HepG2 (cell line): ENCODE measurements at regions of chr2 and their contacts with region 1.

Region 1: DNA sequence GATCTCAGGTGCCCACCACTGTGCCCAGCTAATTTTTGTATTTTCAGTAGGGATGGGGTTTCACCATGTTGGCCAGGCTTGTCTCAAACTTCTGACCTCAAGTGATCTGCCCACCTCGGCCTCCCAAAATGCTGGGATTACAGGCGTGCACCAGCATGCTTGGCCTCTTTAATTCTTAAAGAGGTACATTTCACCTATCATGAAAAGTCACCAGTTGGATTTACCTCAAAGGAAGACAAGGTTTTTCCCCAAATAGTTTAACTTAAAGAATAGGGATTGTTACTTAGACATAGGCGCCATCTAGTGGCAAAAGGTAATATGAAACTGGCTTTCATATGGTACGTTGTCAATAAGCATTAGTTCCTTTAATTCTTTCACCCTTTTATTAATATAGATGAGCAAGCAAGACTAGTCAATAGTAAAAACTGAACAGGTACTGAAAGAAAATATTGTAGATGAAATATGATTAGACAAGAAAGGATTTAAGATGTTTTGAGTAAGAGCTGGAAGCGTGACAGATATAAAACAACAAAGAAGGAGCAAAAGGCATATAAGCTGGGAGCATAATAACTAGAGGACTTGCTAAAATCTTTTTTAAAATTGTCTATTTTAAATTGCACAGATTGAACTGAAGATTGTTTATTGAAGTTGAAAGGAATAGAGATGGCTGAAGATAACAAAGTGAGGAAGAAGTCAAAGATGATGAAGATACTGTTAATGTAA is 35.0 kb upstream of the PSMD14 start:
- DNase-seq: peak; percentile 64
- ATAC-seq: peak; percentile 80
- H3K4me3 ChIP-seq: no peak overlapping the region
- H3K27ac ChIP-seq: no peak overlapping the region
- H3K4me1 ChIP-seq: no peaks in the 10 kb centered on the region
- H3K27me3 ChIP-seq: peaks cover 2 to 4% of the 10 kb centered on the region in 2 experiments; a peak in 2 of 5 replicates
- CTCF ChIP-seq: peak; percentile 81
- EP300 ChIP-seq: no peak
- POLR2A ChIP-seq: no peak
- RAD21 ChIP-seq: peak; percentile 67; the same call in 1 of the 2 replicates

Region 2: DNA sequence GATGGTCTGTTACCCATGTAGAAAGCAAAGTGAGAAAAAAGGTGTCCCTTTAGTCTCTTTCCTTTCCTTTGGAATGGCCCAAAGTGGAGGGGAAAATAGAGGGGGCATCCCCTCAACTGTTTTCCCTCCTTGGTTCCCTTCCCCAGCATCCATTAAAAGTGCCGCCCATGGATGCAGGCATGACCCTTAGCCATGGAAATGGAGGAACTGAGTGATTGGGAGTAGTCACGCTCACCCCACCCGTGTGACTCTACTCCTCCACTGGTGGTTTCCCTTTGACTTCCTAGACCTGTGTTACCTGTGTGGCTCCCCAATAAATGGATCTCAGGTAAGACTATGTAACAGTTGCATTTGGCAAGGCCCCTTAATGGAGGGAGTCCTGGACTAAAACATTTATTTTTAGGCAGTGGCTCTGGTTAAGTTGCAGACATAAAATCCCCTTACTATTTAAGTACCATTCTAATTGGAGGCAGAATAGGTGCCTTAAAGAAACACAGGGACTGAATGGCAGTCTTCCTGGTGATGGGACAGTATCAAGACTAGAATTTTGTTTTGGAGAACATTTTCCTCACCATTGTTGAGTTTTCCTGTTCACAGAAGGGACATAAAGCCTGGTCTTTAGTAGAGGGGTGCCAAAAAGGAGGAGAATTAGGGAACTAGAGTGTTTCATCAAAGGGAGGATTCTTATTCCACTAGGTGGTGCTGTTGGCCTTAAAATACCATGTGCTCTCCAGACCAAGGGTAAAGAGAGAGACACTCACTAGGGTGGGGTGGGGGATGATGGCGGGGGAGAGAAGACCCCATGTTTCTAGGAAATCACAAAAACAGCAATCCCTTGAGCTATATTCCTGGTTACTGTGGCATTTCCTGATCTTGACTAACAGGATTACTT is 1185.1 kb before region 1 on chr2:
- CTCF ChIA-PET with region 1: no interaction called
- POLR2A ChIA-PET with region 1: no interaction called
- in situ Hi-C with region 1: no loop called
- intact Hi-C with region 1: loop called (anchors 2 kb)
- DNase-seq: peak; percentile 30
- ATAC-seq: peak; percentile 83
- H3K4me3 ChIP-seq: no peak overlapping the region
- H3K27ac ChIP-seq: no peak overlapping the region
- H3K4me1 ChIP-seq: no peaks in the 10 kb centered on the region
- H3K27me3 ChIP-seq: no peaks in the 10 kb centered on the region; a peak in 1 of 5 replicates
- CTCF ChIP-seq: peak; percentile 54
- EP300 ChIP-seq: no peak
- POLR2A ChIP-seq: no peak
- RAD21 ChIP-seq: no peak; the same call in 1 of the 2 replicates

Region 3: GRCh38 chr2:160332318-160332717 is 940.9 kb before region 1 on chr2:
- CTCF ChIA-PET with region 1: no interaction called
- POLR2A ChIA-PET with region 1: no interaction called
- in situ Hi-C with region 1: no loop called
- intact Hi-C with region 1: no loop called
- DNase-seq: no peak
- ATAC-seq: no peak
- H3K4me3 ChIP-seq: no peak overlapping the region
- H3K27ac ChIP-seq: no peak overlapping the region
- H3K4me1 ChIP-seq: peaks cover 20% of the 10 kb centered on the region
- H3K27me3 ChIP-seq: no peaks in the 10 kb centered on the region
- CTCF ChIP-seq: no peak
- EP300 ChIP-seq: no peak
- POLR2A ChIP-seq: no peak
- RAD21 ChIP-seq: no peak

Region 4: DNA sequence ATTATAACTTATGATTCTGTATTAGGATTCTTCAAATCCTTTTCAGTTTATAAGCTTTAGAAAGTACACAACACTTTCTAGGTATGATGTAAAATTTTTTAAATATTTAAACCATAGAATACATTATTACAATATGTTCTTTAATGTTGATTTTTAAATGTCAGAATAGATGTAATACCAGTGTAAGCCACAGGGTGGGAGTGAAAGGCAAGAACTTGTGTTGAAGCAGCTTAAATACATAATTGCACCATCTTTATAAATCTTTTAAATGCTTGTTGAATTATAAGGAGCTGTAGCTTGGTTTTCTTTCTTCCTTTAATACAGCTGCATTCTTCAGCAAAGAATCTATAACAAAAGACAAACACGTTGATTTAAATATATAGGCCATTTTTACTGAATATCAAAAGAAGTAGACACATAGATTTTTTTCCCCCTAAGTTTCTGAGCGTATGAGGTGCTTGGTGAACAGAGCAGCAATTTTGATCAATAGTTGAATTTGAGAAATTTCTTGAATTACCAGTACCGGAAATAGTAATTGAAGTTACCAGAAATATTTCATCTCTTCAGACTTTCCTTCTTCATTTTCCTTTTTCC is 50.0 kb before region 1 on chr2:
- CTCF ChIA-PET with region 1: interaction called, 28 read pairs
- POLR2A ChIA-PET with region 1: no interaction called
- in situ Hi-C with region 1: no loop called
- intact Hi-C with region 1: loop called (anchors 1 kb)
- DNase-seq: peak; percentile 51
- ATAC-seq: peak; percentile 69
- H3K4me3 ChIP-seq: no peak overlapping the region
- H3K27ac ChIP-seq: no peak overlapping the region
- H3K4me1 ChIP-seq: no peaks in the 10 kb centered on the region
- H3K27me3 ChIP-seq: no peaks in the 10 kb centered on the region
- CTCF ChIP-seq: peak; percentile 61
- EP300 ChIP-seq: no peak
- POLR2A ChIP-seq: no peak
- RAD21 ChIP-seq: peak; percentile 37; the same call in 1 of the 2 replicates

Region 5: GRCh38 chr2:161250864-161251436 is 22.2 kb before region 1 on chr2:
- CTCF ChIA-PET with region 1: interaction called, 39 read pairs
- POLR2A ChIA-PET with region 1: no interaction called
- in situ Hi-C with region 1: no loop called
- intact Hi-C with region 1: loop called (anchors 1 kb)
- DNase-seq: peak; percentile 74
- ATAC-seq: peak; percentile 97
- H3K4me3 ChIP-seq: no peak overlapping the region
- H3K27ac ChIP-seq: no peak overlapping the region
- H3K4me1 ChIP-seq: no peaks in the 10 kb centered on the region
- H3K27me3 ChIP-seq: peaks cover 0 to 2% of the 10 kb centered on the region in 2 experiments; a peak in 2 of 5 replicates
- CTCF ChIP-seq: peak; percentile 89
- EP300 ChIP-seq: no peak
- POLR2A ChIP-seq: no peak
- RAD21 ChIP-seq: peak; percentile 51

Region 6: GRCh38 chr2:161332371-161332967 is 59.3 kb after region 1 on chr2:
- CTCF ChIA-PET with region 1: no interaction called
- POLR2A ChIA-PET with region 1: no interaction called
- in situ Hi-C with region 1: no loop called
- intact Hi-C with region 1: no loop called
- DNase-seq: no peak
- ATAC-seq: no peak
- H3K4me3 ChIP-seq: no peak overlapping the region
- H3K27ac ChIP-seq: no peak overlapping the region
- H3K4me1 ChIP-seq: peaks cover 5% of the 10 kb centered on the region; the same call in 1 of the 2 replicates
- H3K27me3 ChIP-seq: no peaks in the 10 kb centered on the region
- CTCF ChIP-seq: no peak
- EP300 ChIP-seq: no peak
- POLR2A ChIP-seq: no peak
- RAD21 ChIP-seq: no peak

Region 7: DNA sequence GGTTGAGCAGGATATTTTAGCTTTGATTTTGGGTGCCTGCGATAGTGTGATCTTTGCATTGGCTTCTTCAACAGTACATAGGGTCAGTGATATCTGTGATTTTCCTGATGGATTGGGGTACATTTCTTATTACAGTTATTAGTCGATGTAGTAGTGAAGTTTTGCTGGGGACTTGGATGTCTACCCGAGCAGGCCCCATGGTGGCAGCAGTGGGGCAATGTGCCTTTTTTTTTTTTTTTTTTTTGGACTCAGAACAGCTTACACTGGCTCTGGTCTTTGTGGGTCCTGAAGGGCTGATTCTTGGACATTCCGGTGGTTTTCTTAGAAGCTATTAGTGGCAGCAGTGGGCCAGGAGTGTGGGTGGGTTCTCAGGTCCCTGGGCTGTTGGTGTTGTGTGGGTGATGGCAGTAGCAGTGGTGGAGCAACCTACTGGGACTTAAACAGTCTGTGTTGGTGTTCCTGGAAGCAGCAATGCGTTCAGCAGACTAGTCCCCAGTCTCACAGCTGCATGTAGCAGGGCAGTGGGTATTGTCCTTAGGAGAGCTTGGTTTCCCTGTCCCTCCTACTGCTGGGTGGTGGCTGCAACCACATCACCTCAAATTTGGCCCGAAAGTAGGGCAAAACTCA is 297.3 kb after region 1 on chr2:
- CTCF ChIA-PET with region 1: no interaction called
- POLR2A ChIA-PET with region 1: no interaction called
- in situ Hi-C with region 1: loop called (anchors 25 kb)
- intact Hi-C with region 1: no loop called
- DNase-seq: peak; percentile 10
- ATAC-seq: peak; percentile 89
- H3K4me3 ChIP-seq: no peak overlapping the region
- H3K27ac ChIP-seq: no peak overlapping the region
- H3K4me1 ChIP-seq: no peaks in the 10 kb centered on the region
- H3K27me3 ChIP-seq: no peaks in the 10 kb centered on the region
- CTCF ChIP-seq: peak; percentile 31
- EP300 ChIP-seq: no peak
- POLR2A ChIP-seq: no peak
- RAD21 ChIP-seq: no peak

Region 8: GRCh38 chr2:162343824-162344616 is 1070.8 kb after region 1 on chr2 and contains the start of gene GCA:
- CTCF ChIA-PET with region 1: no interaction called
- POLR2A ChIA-PET with region 1: no interaction called
- in situ Hi-C with region 1: no loop called
- intact Hi-C with region 1: no loop called
- DNase-seq: peak; percentile 97
- ATAC-seq: peak; percentile 99
- H3K4me3 ChIP-seq: peak within 1 kb of the TSS; percentile 77 to 97 (median 90)
- H3K27ac ChIP-seq: peak within 1 kb of the TSS; percentile 61
- H3K4me1 ChIP-seq: peaks cover 22% of the 10 kb centered on the region
- H3K27me3 ChIP-seq: no peaks in the 10 kb centered on the region; a peak in 1 of 5 replicates
- CTCF ChIP-seq: peak; percentile 53
- EP300 ChIP-seq: no peak
- POLR2A ChIP-seq: peak; percentile 63 to 96; a peak in 3 of 4 replicates
- RAD21 ChIP-seq: peak; percentile 28; the same call in 1 of the 2 replicates
- total RNA-seq, gene GCA: 48.3 and 69.6 TPM in 2 replicates